ENCODE measurements at regions of chr17 and their contacts with region 1.

Region 1: DNA sequence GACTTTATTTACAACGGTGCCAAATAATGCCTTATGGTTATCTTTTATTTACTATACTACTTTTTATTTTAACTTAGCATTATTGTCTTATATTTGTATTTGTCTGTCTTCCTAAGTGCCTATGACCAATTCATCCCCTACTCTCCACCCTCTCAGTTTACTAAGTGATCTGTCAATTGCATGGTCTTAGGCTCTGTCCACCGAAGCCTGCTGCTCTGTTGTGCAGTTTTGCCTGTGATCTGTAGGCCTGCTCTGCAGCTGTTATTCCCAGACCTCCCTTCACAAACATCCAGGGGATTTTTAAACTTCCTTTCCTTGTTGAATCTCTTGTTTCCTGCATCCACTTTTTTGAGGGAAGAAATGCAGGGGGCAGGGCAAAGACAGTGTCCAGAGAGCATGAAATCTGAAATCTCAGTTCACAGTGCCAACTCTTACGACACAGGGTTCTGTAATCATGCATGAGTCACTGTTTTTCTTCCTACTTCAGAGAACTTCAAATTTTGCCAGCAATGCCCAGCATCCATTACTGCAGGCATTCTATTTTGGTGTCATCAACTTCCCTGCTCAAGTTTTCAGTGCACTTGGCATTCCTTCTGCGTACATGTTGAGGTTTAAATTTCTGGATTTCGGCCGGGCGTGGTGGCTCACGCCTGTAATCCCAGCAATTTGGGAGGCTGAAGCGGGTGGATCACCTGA is 11.4 kb downstream of the SLFN5 start:
- DNase-seq: no peak
- ATAC-seq: peak; percentile 72
- H3K4me3 ChIP-seq: no peak overlapping the region
- H3K4me3 Mint-ChIP-seq: peak overlapping the region in 9 of 10 donors; percentile 26 to 71 (median 62)
- H3K27ac ChIP-seq: peak overlapping the region; percentile 28
- H3K27ac Mint-ChIP-seq: peak overlapping the region; percentile 2 to 100 (median 88)
- H3K4me1 ChIP-seq: peaks cover 33 to 66% of the 10 kb centered on the region in 2 donors
- H3K4me1 Mint-ChIP-seq: peaks cover 46 to 94% (median 87%) of the 10 kb centered on the region in 7 donors
- H3K27me3 ChIP-seq: no peaks in the 10 kb centered on the region
- H3K27me3 Mint-ChIP-seq: no peaks in the 10 kb centered on the region

Region 2: DNA sequence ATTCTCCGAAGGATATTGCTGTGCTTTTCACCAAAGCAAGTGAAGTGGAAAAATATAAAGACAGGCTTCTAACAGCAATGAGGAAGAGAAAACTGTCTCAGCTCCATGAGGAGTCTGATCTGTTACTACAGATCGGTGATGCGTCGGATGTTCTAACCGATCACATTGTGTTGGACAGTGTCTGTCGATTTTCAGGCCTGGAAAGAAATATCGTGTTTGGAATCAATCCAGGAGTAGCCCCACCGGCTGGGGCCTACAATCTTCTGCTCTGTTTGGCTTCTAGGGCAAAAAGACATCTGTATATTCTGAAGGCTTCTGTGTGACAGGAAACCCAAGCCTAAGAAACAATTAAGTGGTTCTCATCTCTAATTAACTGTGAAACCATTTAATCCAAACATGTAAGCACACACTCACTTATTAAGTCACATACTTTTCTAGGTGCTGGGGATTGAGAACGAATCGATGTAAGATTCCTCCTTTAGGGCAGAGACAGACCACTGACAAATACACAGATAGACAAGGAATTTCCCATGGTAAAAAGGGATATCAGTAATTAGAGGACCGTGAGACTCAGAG is 11.4 kb after region 1 on chr17:
- CTCF ChIA-PET with region 1: interaction called, 9 read pairs
- POLR2A ChIA-PET with region 1: interaction called, 20 read pairs
- intact Hi-C with region 1: no loop called
- DNase-seq: no peak
- ATAC-seq: no peak
- H3K4me3 ChIP-seq: no peak overlapping the region
- H3K4me3 Mint-ChIP-seq: peak overlapping the region; percentile 10 to 76 (median 58)
- H3K27ac ChIP-seq: peak overlapping the region; percentile 52
- H3K27ac Mint-ChIP-seq: peak overlapping the region in 8 of 9 donors; percentile 49 to 91 (median 85)
- H3K4me1 ChIP-seq: peaks cover 14 to 47% of the 10 kb centered on the region in 2 donors
- H3K4me1 Mint-ChIP-seq: peaks cover 32 to 84% (median 75%) of the 10 kb centered on the region in 7 donors
- H3K27me3 ChIP-seq: no peaks in the 10 kb centered on the region
- H3K27me3 Mint-ChIP-seq: no peaks in the 10 kb centered on the region

Region 3: GRCh38 chr17:35286120-35286781 is 32.0 kb after region 1 on chr17:
- CTCF ChIA-PET with region 1: no interaction called
- POLR2A ChIA-PET with region 1: interaction called, 3 read pairs
- intact Hi-C with region 1: loop called in 1 of 2 experiments (anchors 2 kb)
- DNase-seq: peak in 7 of 9 donors; percentile 31 to 65 (median 56)
- ATAC-seq: peak; percentile 92
- H3K4me3 ChIP-seq: peak overlapping the region; percentile 11
- H3K4me3 Mint-ChIP-seq: peak overlapping the region in 9 of 10 donors; percentile 7 to 77 (median 60)
- H3K27ac ChIP-seq: peak overlapping the region; percentile 67
- H3K27ac Mint-ChIP-seq: peak overlapping the region; percentile 10 to 97 (median 88)
- H3K4me1 ChIP-seq: peaks cover 4 to 21% of the 10 kb centered on the region in 2 donors
- H3K4me1 Mint-ChIP-seq: peaks cover 28 to 61% (median 56%) of the 10 kb centered on the region in 7 donors
- H3K27me3 ChIP-seq: no peaks in the 10 kb centered on the region
- H3K27me3 Mint-ChIP-seq: peaks cover 0 to 19% (median 0%) of the 10 kb centered on the region in 5 donors

Measured in naive thymus-derived CD4-positive, alpha-beta T cell (primary cell).